Activated CD8-positive, alpha-beta T cell treated with anti-CD3 and anti-CD28 coated beads, Interleukin-2, amount 10 ng/mL, durations not matched to agents 7 days and 5 days (primary cell): ENCODE measurements at regions of chr10 and their contacts with region 1.

Region 1: GRCh38 chr10:113563306-113564088 is 10.6 kb downstream of the HABP2 start:
- DNase-seq: peak; percentile 80
- ATAC-seq: peak; percentile 97
- H3K4me3 Mint-ChIP-seq: peak overlapping the region; percentile 73
- H3K27ac Mint-ChIP-seq: peak overlapping the region; percentile 67
- H3K4me1 Mint-ChIP-seq: no peaks in the 10 kb centered on the region
- H3K27me3 Mint-ChIP-seq: peaks cover 6% of the 10 kb centered on the region

Region 2: GRCh38 chr10:113521123-113521795 is 42.2 kb before region 1 on chr10:
- CTCF ChIA-PET with region 1: interaction called, 12 read pairs
- POLR2A ChIA-PET with region 1: no interaction called
- DNase-seq: peak; percentile 46
- ATAC-seq: no peak
- H3K4me3 Mint-ChIP-seq: no peak overlapping the region
- H3K27ac Mint-ChIP-seq: no peak overlapping the region
- H3K4me1 Mint-ChIP-seq: no peaks in the 10 kb centered on the region
- H3K27me3 Mint-ChIP-seq: no peaks in the 10 kb centered on the region